HCT116 (cell line): ENCODE measurements at regions of chr7 and their contacts with region 1.

Region 1: DNA sequence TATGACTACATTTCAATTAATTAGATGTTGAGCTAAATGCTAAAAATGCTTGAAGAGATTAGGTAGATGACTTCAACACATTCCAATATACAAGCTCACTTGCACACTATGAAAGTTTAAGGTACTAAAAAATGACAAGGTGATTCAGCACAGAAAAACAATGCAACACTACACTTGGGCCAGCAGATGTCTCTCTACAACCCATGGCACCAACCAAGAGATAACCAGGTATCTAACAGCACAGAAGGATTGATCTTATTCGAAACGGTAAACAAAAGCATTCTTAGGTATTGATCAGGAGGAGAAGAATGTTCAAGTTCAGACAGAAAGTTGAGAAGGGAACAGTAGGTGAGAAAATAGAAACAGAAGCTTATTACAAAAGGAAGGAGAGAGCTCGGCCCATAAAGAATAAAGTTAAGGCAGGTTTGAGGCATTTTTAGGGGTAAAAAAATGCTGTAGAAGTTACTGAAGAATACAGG is 248.2 kb upstream of the KLF14 start:
- DNase-seq: no peak
- ATAC-seq: peak; percentile 79
- H3K4me3 ChIP-seq: no peak overlapping the region
- H3K27ac ChIP-seq: peak overlapping the region; percentile 67
- H3K4me1 ChIP-seq: peaks cover 57 to 84% of the 10 kb centered on the region in 2 experiments
- H3K27me3 ChIP-seq: no peaks in the 10 kb centered on the region
- CTCF ChIP-seq: peak; percentile 75 to 85 (median 81)
- POLR2A ChIP-seq: no peak
- RAD21 ChIP-seq: peak; percentile 91

Region 2: GRCh38 chr7:130970696-130971095 is 11.5 kb before region 1 on chr7:
- CTCF ChIA-PET with region 1: interaction called, 14 read pairs
- POLR2A ChIA-PET with region 1: no interaction called
- RAD21 ChIA-PET with region 1: no interaction called
- intact Hi-C with region 1: no loop called
- DNase-seq: no peak
- ATAC-seq: no peak
- H3K4me3 ChIP-seq: no peak overlapping the region
- H3K27ac ChIP-seq: peak overlapping the region; percentile 44; the same call in 1 of the 2 replicates
- H3K4me1 ChIP-seq: peaks cover 21 to 50% of the 10 kb centered on the region in 2 experiments
- H3K27me3 ChIP-seq: no peaks in the 10 kb centered on the region
- CTCF ChIP-seq: no peak
- POLR2A ChIP-seq: no peak
- RAD21 ChIP-seq: no peak

Region 3: GRCh38 chr7:130996841-130997231 is 14.6 kb after region 1 on chr7:
- CTCF ChIA-PET with region 1: interaction called, 11 read pairs
- POLR2A ChIA-PET with region 1: interaction called, 3 read pairs
- RAD21 ChIA-PET with region 1: interaction called in 1 of 2 experiments, 3 read pairs
- intact Hi-C with region 1: no loop called
- DNase-seq: peak; percentile 80
- ATAC-seq: peak; percentile 24
- H3K4me3 ChIP-seq: no peak overlapping the region
- H3K27ac ChIP-seq: peak overlapping the region; percentile 100
- H3K4me1 ChIP-seq: peaks cover 83 to 98% of the 10 kb centered on the region in 2 experiments
- H3K27me3 ChIP-seq: no peaks in the 10 kb centered on the region
- CTCF ChIP-seq: no peak
- POLR2A ChIP-seq: no peak
- RAD21 ChIP-seq: no peak

Region 4: DNA sequence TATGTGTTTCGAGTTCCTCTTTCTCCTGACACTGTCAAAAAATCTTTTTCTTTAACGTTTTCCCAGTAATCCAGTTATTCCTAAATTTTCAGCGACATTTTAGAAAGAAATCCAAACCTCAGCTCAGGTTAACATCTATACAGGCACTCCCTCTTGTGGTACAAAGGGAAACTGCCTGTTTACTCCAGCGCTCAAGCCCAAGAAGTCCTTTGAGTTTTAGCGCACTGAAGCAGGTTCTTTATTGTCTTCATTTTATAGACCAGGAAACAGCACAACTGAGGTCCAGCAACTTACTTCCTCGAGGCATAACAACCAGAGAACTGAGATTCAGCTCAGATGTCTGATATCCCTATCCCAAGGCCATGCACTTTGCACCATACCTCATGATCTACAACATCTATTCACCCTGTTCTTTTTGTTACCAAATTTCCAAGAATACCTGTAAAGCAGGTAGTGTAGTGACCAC is 58.3 kb after region 1 on chr7:
- CTCF ChIA-PET with region 1: interaction called, 26 read pairs
- POLR2A ChIA-PET with region 1: no interaction called
- RAD21 ChIA-PET with region 1: interaction called in 1 of 2 experiments, 3 read pairs
- intact Hi-C with region 1: loop called (anchors 1 kb)
- DNase-seq: peak; percentile 73
- ATAC-seq: peak; percentile 79
- H3K4me3 ChIP-seq: no peak overlapping the region
- H3K27ac ChIP-seq: peak overlapping the region; percentile 65
- H3K4me1 ChIP-seq: peaks cover 56 to 63% of the 10 kb centered on the region in 2 experiments
- H3K27me3 ChIP-seq: no peaks in the 10 kb centered on the region
- CTCF ChIP-seq: peak; percentile 85 to 96 (median 90)
- POLR2A ChIP-seq: no peak
- RAD21 ChIP-seq: peak; percentile 99

Region 5: DNA sequence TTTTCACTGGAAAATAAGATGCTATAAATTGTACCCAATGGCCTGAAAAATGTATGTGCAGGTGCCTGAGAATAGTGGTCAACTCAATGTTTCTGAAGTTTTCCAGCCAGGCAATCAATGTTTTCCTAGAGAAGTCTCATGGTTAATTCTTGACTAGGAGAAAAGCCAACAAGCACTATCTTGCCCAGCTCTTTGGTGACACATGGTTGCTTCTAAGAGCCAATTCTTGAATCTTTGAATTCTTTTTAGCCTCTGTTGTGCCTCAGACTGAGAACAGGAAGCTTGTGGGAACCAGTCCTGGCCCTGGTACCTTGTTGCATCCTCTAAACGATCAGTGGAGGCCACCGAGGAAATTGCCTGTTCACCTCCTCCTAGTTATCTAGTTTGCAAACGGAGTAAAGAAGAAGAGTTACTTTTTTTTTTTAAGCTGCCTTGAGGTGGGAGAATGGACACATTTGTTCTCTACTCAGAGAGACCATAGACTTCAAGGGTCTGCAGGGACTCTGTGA is 201.5 kb after region 1 on chr7:
- CTCF ChIA-PET with region 1: no interaction called
- POLR2A ChIA-PET with region 1: no interaction called
- RAD21 ChIA-PET with region 1: no interaction called
- intact Hi-C with region 1: no loop called
- DNase-seq: no peak
- ATAC-seq: no peak
- H3K4me3 ChIP-seq: no peak overlapping the region
- H3K27ac ChIP-seq: no peak overlapping the region
- H3K4me1 ChIP-seq: peaks cover 16 to 22% of the 10 kb centered on the region in 2 experiments
- H3K27me3 ChIP-seq: no peaks in the 10 kb centered on the region
- CTCF ChIP-seq: no peak
- POLR2A ChIP-seq: no peak
- RAD21 ChIP-seq: no peak